ENCODE measurements at regions of chr3 and their contacts with region 1.

Region 1: DNA sequence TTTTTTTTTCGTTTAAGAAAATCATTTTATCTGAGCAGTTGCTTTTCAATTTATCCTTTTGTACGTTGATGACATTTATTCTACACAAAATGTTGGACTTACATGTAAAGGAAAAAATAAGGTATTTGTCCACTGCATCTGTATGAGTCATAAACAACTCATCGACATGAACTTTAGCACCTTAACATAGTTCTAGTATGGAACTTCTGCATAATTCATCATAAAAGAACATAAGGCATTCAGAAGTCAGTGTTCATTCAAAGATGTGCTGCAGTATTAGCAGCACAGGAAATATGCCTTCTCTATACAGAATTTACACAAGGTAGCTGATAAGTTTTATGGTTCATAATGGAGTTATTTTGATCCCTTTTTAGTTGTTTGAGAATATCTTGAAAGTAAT is 801.6 kb downstream of the CADM2 start:
- DNase-seq: peak; percentile 86
- ATAC-seq: peak; percentile 52
- H3K4me3 ChIP-seq: no peak overlapping the region
- H3K27ac ChIP-seq: peak overlapping the region; percentile 59
- H3K4me1 ChIP-seq: peaks cover 39% of the 10 kb centered on the region
- H3K27me3 ChIP-seq: no peaks in the 10 kb centered on the region
- CTCF ChIP-seq: no peak

Region 2: GRCh38 chr3:85678713-85679112 is 81.6 kb before region 1 on chr3:
- CTCF ChIA-PET with region 1: no interaction called
- POLR2A ChIA-PET with region 1: no interaction called
- intact Hi-C with region 1: loop called (anchors 2 kb)
- DNase-seq: peak; percentile 90
- ATAC-seq: peak; percentile 94
- H3K4me3 ChIP-seq: no peak overlapping the region
- H3K27ac ChIP-seq: peak overlapping the region; percentile 39
- H3K4me1 ChIP-seq: peaks cover 20% of the 10 kb centered on the region
- H3K27me3 ChIP-seq: no peaks in the 10 kb centered on the region
- CTCF ChIP-seq: no peak

Region 3: DNA sequence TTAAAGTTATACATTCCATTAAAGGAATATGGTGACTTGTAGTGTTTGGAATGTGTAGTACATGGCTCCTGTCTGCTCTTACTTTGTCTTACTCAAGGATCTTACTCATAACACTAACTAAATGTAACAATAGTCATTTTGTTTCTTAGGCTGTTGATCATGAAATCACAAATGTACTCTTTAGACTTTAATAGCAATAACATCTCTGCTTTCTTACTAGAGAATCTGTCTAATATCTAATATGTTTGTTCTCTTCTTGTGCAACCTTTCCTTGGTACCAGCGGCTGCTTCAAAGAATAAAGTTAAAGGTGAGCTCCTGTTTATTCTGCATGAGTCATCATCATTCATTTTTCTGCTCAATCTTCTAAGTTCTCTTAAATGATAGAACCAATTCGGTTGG is 34.1 kb before region 1 on chr3:
- CTCF ChIA-PET with region 1: interaction called, 3 read pairs
- POLR2A ChIA-PET with region 1: no interaction called
- intact Hi-C with region 1: loop called (anchors 1 kb)
- DNase-seq: peak; percentile 90
- ATAC-seq: peak; percentile 95
- H3K4me3 ChIP-seq: 0 out of 2 replicates have a peak overlapping the region, but pooled peaks have one; percentile 5
- H3K27ac ChIP-seq: peak overlapping the region; percentile 48
- H3K4me1 ChIP-seq: peaks cover 36% of the 10 kb centered on the region
- H3K27me3 ChIP-seq: no peaks in the 10 kb centered on the region
- CTCF ChIP-seq: no peak

Region 4: GRCh38 chr3:85781806-85782205 is 21.5 kb after region 1 on chr3:
- CTCF ChIA-PET with region 1: no interaction called
- POLR2A ChIA-PET with region 1: no interaction called
- intact Hi-C with region 1: loop called (anchors 1 kb)
- DNase-seq: peak; percentile 78
- ATAC-seq: peak; percentile 70
- H3K4me3 ChIP-seq: no peak overlapping the region
- H3K27ac ChIP-seq: no peak overlapping the region
- H3K4me1 ChIP-seq: peaks cover 25% of the 10 kb centered on the region
- H3K27me3 ChIP-seq: no peaks in the 10 kb centered on the region
- CTCF ChIP-seq: no peak

Region 5: DNA sequence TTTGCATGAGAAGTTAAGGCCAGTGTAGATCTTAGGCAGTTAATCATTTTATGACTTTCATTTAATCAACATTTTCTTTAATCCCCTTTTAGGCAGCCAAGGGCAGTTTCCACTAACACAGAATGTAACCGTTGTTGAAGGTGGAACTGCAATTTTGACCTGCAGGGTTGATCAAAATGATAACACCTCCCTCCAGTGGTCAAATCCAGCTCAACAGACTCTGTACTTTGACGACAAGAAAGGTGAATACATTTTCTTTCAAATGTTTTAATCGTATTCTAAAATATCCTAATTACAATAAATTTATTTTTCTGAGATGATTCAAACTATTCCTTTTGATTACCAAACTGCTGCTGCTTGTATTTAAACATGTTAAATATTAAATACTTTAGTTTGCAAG is 41.6 kb after region 1 on chr3:
- CTCF ChIA-PET with region 1: no interaction called
- POLR2A ChIA-PET with region 1: no interaction called
- intact Hi-C with region 1: no loop called
- DNase-seq: peak; percentile 80
- ATAC-seq: peak; percentile 95
- H3K4me3 ChIP-seq: no peak overlapping the region
- H3K27ac ChIP-seq: no peak overlapping the region
- H3K4me1 ChIP-seq: no peaks in the 10 kb centered on the region; the same call in 1 of the 2 replicates
- H3K27me3 ChIP-seq: no peaks in the 10 kb centered on the region
- CTCF ChIP-seq: peak; percentile 91